ENCODE measurements at regions of chr2 and their contacts with region 1.

Region 1: GRCh38 chr2:28894470-28895177 is at the start of gene WDR43:
- DNase-seq: peak; percentile 98
- H3K4me3 Mint-ChIP-seq: peak within 1 kb of the TSS; percentile 88
- H3K27ac Mint-ChIP-seq: peak within 1 kb of the TSS; percentile 92
- H3K4me1 Mint-ChIP-seq: peaks cover 27% of the 10 kb centered on the region
- H3K27me3 Mint-ChIP-seq: no peaks in the 10 kb centered on the region
- CTCF ChIP-seq: no peak
- total RNA-seq, gene WDR43: 100 and 160 TPM in 2 replicates

Region 2: GRCh38 chr2:28821295-28821958 is 73.2 kb before region 1 on chr2:
- CTCF ChIA-PET with region 1: no interaction called
- POLR2A ChIA-PET with region 1: interaction called, 4 read pairs
- intact Hi-C with region 1: loop called (anchors 5 kb)
- DNase-seq: peak; percentile 70
- H3K4me3 Mint-ChIP-seq: no peak overlapping the region
- H3K27ac Mint-ChIP-seq: no peak overlapping the region
- H3K4me1 Mint-ChIP-seq: no peaks in the 10 kb centered on the region
- H3K27me3 Mint-ChIP-seq: no peaks in the 10 kb centered on the region
- CTCF ChIP-seq: peak; percentile 59

Region 3: DNA sequence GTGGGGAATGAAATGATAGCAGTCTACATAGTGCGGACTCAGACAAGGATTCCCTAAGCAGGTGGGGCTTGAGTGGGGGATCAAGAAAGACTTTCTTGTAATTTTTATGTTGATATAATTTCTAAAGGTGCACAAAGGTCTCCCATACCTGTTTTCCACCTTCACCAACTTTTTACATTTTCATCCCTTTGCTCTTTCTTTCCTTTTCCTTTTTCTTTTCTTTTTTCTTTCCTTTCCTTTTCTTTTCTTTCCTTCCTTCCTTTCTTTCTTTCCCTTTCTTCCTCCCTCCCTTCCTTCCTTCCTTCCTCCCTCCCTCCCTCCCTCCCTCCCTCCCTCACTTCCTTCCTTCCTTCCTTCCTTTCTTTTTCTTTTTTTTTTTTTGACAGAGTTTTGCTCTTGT is 14.4 kb before region 1 on chr2:
- CTCF ChIA-PET with region 1: interaction called, 5 read pairs
- POLR2A ChIA-PET with region 1: interaction called, 11 read pairs
- intact Hi-C with region 1: no loop called
- DNase-seq: no peak
- H3K4me3 Mint-ChIP-seq: no peak overlapping the region
- H3K27ac Mint-ChIP-seq: no peak overlapping the region
- H3K4me1 Mint-ChIP-seq: no peaks in the 10 kb centered on the region
- H3K27me3 Mint-ChIP-seq: no peaks in the 10 kb centered on the region
- CTCF ChIP-seq: no peak

Region 4: DNA sequence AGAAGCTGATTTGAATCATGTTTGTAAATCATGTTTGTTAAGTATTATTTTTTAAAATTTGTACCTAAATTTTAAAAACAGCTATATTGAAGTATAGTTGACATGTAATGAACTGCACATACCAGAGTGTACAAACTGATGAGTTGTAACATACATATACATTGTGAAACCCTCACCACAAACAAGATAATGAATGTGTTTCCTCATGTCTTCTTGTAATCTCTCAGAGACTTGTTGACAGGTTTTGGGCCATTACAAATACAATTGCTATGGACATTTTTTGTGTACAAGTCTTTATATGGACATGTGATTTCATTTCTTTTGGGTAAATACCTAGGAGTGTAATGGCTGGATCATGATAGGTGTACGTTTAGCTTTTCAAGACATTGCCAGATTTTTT is 21.3 kb after region 1 on chr2:
- CTCF ChIA-PET with region 1: no interaction called
- POLR2A ChIA-PET with region 1: interaction called, 32 read pairs
- intact Hi-C with region 1: no loop called
- DNase-seq: no peak
- H3K4me3 Mint-ChIP-seq: no peak overlapping the region
- H3K27ac Mint-ChIP-seq: peak overlapping the region; percentile 78
- H3K4me1 Mint-ChIP-seq: peaks cover 8% of the 10 kb centered on the region
- H3K27me3 Mint-ChIP-seq: no peaks in the 10 kb centered on the region
- CTCF ChIP-seq: no peak

Region 5: GRCh38 chr2:29115797-29116781 is 221.5 kb after region 1 on chr2:
- CTCF ChIA-PET with region 1: no interaction called
- POLR2A ChIA-PET with region 1: interaction called, 10 read pairs
- intact Hi-C with region 1: no loop called
- DNase-seq: peak; percentile 87
- H3K4me3 Mint-ChIP-seq: peak overlapping the region; percentile 90
- H3K27ac Mint-ChIP-seq: peak overlapping the region; percentile 49
- H3K4me1 Mint-ChIP-seq: peaks cover 40% of the 10 kb centered on the region
- H3K27me3 Mint-ChIP-seq: no peaks in the 10 kb centered on the region
- CTCF ChIP-seq: no peak